Activated CD8-positive, alpha-beta T cell treated with anti-CD3 and anti-CD28 coated beads, Interleukin-2, amount 10 ng/mL, durations not matched to agents 7 days and 5 days (primary cell): ENCODE measurements at regions of chr1 and their contacts with region 1.

Region 1: GRCh38 chr1:42681741-42682483 is at the start of gene YBX1:
- DNase-seq: peak; percentile 96
- ATAC-seq: peak; percentile 95
- H3K4me3 Mint-ChIP-seq: peak within 1 kb of the TSS; percentile 97
- H3K27ac Mint-ChIP-seq: peak within 1 kb of the TSS; percentile 99
- H3K4me1 Mint-ChIP-seq: peaks cover 49% of the 10 kb centered on the region
- H3K27me3 Mint-ChIP-seq: no peaks in the 10 kb centered on the region
- total RNA-seq, gene YBX1: 733 to 791 TPM

Region 2: GRCh38 chr1:42557230-42557851 is 124.6 kb before region 1 on chr1:
- CTCF ChIA-PET with region 1: no interaction called
- POLR2A ChIA-PET with region 1: no interaction called
- DNase-seq: no peak
- ATAC-seq: no peak
- H3K4me3 Mint-ChIP-seq: no peak overlapping the region
- H3K27ac Mint-ChIP-seq: no peak overlapping the region
- H3K4me1 Mint-ChIP-seq: no peaks in the 10 kb centered on the region
- H3K27me3 Mint-ChIP-seq: no peaks in the 10 kb centered on the region

Region 3: DNA sequence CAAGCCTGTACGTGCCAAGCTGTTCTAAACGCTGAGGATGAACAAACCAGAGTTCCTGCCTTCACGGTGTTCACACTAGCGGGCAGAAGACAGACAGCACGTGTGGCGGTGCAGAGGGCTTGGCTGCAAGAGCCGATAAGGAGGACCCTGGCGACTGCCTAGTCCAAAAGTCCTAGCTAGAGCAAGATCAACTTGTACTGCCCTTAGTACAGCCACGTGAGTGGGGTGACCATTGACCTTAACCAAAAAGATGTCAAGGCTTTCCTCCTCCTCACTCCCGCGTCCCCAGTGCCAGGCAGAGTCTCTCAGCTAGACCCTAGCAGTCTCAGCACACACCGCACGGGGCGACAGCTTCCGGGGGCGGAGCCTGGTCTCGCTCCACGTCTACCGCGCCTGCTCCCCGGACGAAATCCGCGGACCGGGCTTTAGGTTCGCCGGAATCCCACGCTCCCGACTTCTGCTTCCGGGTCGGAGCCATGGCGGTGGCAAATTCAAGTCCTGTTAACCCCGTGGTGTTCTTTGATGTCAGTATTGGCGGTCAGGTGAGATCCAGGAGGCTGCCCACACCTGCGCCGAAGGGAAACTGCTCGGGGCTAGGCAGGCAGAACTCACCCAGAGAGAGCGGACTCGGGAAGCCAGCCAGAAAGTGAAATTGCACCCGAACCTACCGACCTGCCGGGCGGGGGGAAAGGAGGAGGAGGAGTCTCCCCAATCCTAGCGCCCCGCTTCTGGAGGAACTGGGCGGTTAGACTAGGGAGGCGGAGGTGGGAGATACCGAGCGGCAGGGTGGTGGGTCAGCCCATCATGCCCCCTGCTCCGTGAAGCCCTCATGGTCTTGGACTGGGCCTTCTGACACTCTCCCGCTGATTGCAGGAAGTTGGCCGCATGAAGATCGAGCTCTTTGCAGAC is 23.7 kb before region 1 on chr1 and contains the start of gene PPIH:
- CTCF ChIA-PET with region 1: interaction called, 17 read pairs
- POLR2A ChIA-PET with region 1: interaction called, 41 read pairs
- DNase-seq: peak; percentile 97
- ATAC-seq: peak; percentile 97
- H3K4me3 Mint-ChIP-seq: peak within 1 kb of the TSS; percentile 88
- H3K27ac Mint-ChIP-seq: peak within 1 kb of the TSS; percentile 99
- H3K4me1 Mint-ChIP-seq: peaks cover 42% of the 10 kb centered on the region
- H3K27me3 Mint-ChIP-seq: no peaks in the 10 kb centered on the region
- total RNA-seq, gene PPIH: 112 to 121 TPM

Region 4: DNA sequence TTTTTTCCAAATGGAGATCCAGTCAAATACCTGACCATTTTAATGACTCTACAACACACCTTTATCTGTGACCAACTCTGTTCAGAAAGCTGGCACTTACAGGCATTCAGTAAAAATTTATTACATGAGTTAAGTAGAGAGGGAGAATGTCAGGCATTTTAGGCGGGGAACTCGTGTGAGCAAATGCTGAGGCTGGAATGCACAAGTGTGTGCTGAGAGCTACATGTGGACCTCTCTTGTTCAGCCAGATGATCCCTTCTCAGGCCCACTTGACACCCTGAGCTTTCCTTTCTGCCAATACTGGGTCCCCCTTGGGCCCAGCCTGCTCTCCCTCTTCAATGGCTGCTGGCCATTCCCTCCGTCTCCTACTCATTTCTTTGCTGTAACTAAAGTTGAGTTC is 12.0 kb before region 1 on chr1:
- CTCF ChIA-PET with region 1: interaction called, 3 read pairs
- POLR2A ChIA-PET with region 1: interaction called, 10 read pairs
- DNase-seq: no peak
- ATAC-seq: no peak
- H3K4me3 Mint-ChIP-seq: no peak overlapping the region
- H3K27ac Mint-ChIP-seq: no peak overlapping the region
- H3K4me1 Mint-ChIP-seq: no peaks in the 10 kb centered on the region
- H3K27me3 Mint-ChIP-seq: no peaks in the 10 kb centered on the region

Region 5: DNA sequence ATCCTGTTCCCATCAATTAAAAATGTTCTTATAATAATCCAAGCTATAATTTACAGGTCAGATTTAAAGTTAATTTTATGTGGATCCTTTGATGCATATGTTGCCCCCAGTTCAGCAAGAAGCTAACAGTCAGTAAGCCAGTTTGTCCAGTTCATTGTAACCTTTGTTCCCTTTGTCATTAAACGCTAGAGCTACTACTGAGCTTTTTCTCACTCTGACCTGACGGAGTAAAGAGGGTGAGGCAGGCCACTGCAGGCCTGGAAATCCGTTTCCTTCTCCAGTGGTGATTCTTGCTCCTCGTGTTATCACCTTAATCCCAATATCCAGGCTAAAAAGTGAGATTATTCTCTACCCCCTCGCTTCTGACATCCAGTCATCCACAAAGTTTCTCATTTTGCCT is 10.5 kb after region 1 on chr1:
- CTCF ChIA-PET with region 1: interaction called, 6 read pairs
- POLR2A ChIA-PET with region 1: interaction called, 16 read pairs
- DNase-seq: no peak
- ATAC-seq: no peak
- H3K4me3 Mint-ChIP-seq: no peak overlapping the region
- H3K27ac Mint-ChIP-seq: peak overlapping the region; percentile 11
- H3K4me1 Mint-ChIP-seq: peaks cover 55% of the 10 kb centered on the region
- H3K27me3 Mint-ChIP-seq: no peaks in the 10 kb centered on the region

Region 6: GRCh38 chr1:42730988-42731387 is 49.1 kb after region 1 on chr1:
- CTCF ChIA-PET with region 1: no interaction called
- POLR2A ChIA-PET with region 1: no interaction called
- DNase-seq: peak; percentile 38
- ATAC-seq: no peak
- H3K4me3 Mint-ChIP-seq: no peak overlapping the region
- H3K27ac Mint-ChIP-seq: no peak overlapping the region
- H3K4me1 Mint-ChIP-seq: no peaks in the 10 kb centered on the region
- H3K27me3 Mint-ChIP-seq: no peaks in the 10 kb centered on the region